CD4-positive, alpha-beta T cell (primary cell): ENCODE measurements at regions of chr14 and their contacts with region 1.

Region 1: GRCh38 chr14:67487937-67488893 is at the start of gene TMEM229B:
- DNase-seq: peak; percentile 50 to 94 (median 69)
- ATAC-seq: peak; percentile 98
- H3K4me3 ChIP-seq: peak within 1 kb of the TSS; percentile 66
- H3K4me3 Mint-ChIP-seq: peak within 1 kb of the TSS; percentile 99
- H3K27ac ChIP-seq: peak within 1 kb of the TSS; percentile 68 to 84
- H3K27ac Mint-ChIP-seq: peak within 1 kb of the TSS; percentile 100
- H3K4me1 ChIP-seq: peaks cover 52% of the 10 kb centered on the region
- H3K4me1 Mint-ChIP-seq: peaks cover 61% of the 10 kb centered on the region
- H3K27me3 ChIP-seq: no peaks in the 10 kb centered on the region
- H3K27me3 Mint-ChIP-seq: no peaks in the 10 kb centered on the region
- CTCF ChIP-seq: no peak
- total RNA-seq, gene TMEM229B: 7.1 to 9.1 TPM

Region 2: DNA sequence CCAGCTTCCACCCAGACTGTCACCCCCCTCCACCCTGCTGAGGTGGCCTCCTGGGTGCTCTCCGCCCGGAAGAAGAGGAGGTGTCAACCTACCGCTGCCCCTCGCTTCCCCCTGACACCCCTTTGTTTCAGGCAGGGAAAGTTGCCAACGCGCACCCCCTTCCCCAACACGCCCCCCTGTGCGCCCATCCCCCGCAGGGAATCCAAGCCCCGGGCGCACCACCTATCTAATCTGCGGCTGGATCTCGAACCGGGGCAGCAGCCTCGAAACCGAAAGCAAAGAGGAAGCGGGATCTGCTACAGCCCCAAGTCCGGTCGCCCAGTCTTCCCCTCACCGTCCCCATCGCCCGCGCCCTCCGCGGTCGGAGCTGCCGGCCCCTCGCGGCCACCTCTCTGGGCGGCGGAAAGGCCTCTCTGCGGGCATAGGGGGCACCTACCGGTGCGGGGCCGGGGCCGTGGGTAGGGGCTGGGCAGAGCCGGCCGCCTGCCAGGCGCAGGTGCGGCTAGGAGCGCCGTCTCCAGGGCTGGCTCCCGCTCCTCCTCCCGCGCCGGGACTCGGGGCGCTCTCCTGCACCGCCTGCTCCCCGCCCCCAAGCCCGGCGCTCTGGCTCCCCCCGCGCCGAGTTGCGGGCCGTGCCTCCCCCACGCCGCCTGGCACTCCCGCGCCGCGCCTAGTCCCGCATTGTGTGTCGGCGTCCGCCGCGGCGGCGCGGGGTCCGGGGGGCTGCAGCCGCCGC is 26.6 kb after region 1 on chr14:
- CTCF ChIA-PET with region 1: interaction called, 5 read pairs
- POLR2A ChIA-PET with region 1: interaction called, 27 read pairs
- intact Hi-C with region 1: loop called (anchors 1 to 2 kb)
- DNase-seq: peak in 12 of 14 experiments; percentile 11 to 70 (median 36)
- ATAC-seq: peak; percentile 77
- H3K4me3 ChIP-seq: peak overlapping the region; percentile 84
- H3K4me3 Mint-ChIP-seq: peak overlapping the region; percentile 90
- H3K27ac ChIP-seq: peak overlapping the region; percentile 58 to 73
- H3K27ac Mint-ChIP-seq: peak overlapping the region; percentile 88
- H3K4me1 ChIP-seq: peaks cover 28% of the 10 kb centered on the region
- H3K4me1 Mint-ChIP-seq: peaks cover 37% of the 10 kb centered on the region
- H3K27me3 ChIP-seq: no peaks in the 10 kb centered on the region
- H3K27me3 Mint-ChIP-seq: no peaks in the 10 kb centered on the region
- CTCF ChIP-seq: no peak